ENCODE measurements at regions of chr18 and their contacts with region 1.

Region 1: GRCh38 chr18:62883937-62884735 is 168.8 kb downstream of the PHLPP1 start:
- DNase-seq: no peak
- CTCF ChIP-seq: no peak

Region 2: GRCh38 chr18:62894681-62895390 is 10.7 kb after region 1 on chr18:
- CTCF ChIA-PET with region 1: interaction called, 10 read pairs
- POLR2A ChIA-PET with region 1: no interaction called
- DNase-seq: no peak
- CTCF ChIP-seq: no peak

Measured in GM10248 (cell line).